Activated T-helper 2 cell treated with anti-CD3 and anti-CD28 coated beads, Interferon-gamma antibody, Interleukin-2, Interleukin-4, amounts not matched to agents 10 μg/mL and 5 μg/mL and 100 μg/mL, durations not matched to agents 14 hours and 24 hours and 36 hours (primary cell): ENCODE measurements at regions of chr11 and their contacts with region 1.

Region 1: GRCh38 chr11:114180301-114181055 is 115.7 kb upstream of the NNMT start:
- DNase-seq: no peak
- H3K4me3 Mint-ChIP-seq: no peak overlapping the region
- H3K27ac Mint-ChIP-seq: no peak overlapping the region
- H3K4me1 Mint-ChIP-seq: peaks cover 64% of the 10 kb centered on the region
- H3K27me3 Mint-ChIP-seq: no peaks in the 10 kb centered on the region

Region 2: GRCh38 chr11:114060392-114061350 is 119.8 kb before region 1 on chr11:
- intact Hi-C with region 1: loop called (anchors 5 kb)
- DNase-seq: no peak
- H3K4me3 Mint-ChIP-seq: peak overlapping the region; percentile 81
- H3K27ac Mint-ChIP-seq: no peak overlapping the region
- H3K4me1 Mint-ChIP-seq: peaks cover 11% of the 10 kb centered on the region
- H3K27me3 Mint-ChIP-seq: peaks cover 73% of the 10 kb centered on the region

Region 3: GRCh38 chr11:114085965-114086793 is 94.3 kb before region 1 on chr11:
- intact Hi-C with region 1: loop called (anchors 5 kb)
- DNase-seq: no peak
- H3K4me3 Mint-ChIP-seq: no peak overlapping the region
- H3K27ac Mint-ChIP-seq: no peak overlapping the region
- H3K4me1 Mint-ChIP-seq: peaks cover 35% of the 10 kb centered on the region
- H3K27me3 Mint-ChIP-seq: peaks cover 23% of the 10 kb centered on the region

Region 4: DNA sequence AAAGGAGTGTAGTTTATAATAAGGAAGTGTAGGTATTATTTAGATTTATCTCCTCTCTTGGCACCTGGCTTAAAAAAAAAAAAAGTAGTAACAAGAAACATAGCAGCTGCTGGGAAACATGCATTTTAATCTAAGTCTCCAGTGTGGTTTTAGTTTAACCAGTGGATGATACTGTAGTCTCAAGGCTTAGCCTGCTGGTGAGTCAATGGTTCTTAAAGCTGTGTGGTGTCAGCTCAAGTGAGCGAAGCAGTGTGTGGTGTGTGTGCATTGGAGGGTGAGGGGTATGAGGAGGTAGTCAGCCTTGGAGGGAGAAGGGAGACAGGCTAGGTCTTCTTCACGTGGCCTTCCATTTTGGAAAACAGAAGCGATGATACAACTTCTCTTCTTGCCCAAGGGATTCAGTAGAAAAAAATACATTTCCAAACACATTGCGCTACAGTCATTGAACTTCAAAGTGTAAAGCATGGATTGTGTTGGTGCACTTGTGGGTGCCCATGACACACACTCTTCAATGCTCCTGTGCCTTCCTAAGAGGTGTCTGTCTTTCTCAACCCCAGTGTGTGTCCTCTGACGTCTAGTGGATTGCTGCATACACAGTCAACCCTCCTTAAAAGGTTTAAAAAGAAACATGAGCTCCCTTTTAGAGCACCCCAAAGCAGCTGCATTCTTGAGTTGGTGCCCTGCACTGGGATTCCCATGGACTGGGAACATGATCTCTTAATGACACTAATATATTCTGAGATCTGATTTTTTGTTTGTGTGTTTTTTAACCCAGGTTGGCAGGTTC is 80.9 kb before region 1 on chr11:
- intact Hi-C with region 1: loop called (anchors 1 kb)
- DNase-seq: no peak
- H3K4me3 Mint-ChIP-seq: no peak overlapping the region
- H3K27ac Mint-ChIP-seq: no peak overlapping the region
- H3K4me1 Mint-ChIP-seq: peaks cover 52% of the 10 kb centered on the region
- H3K27me3 Mint-ChIP-seq: peaks cover 19% of the 10 kb centered on the region

Region 5: GRCh38 chr11:114166897-114167323 is 13.6 kb before region 1 on chr11:
- intact Hi-C with region 1: loop called (anchors 1 kb)
- DNase-seq: no peak
- H3K4me3 Mint-ChIP-seq: peak overlapping the region; percentile 11
- H3K27ac Mint-ChIP-seq: peak overlapping the region; percentile 48
- H3K4me1 Mint-ChIP-seq: peaks cover 64% of the 10 kb centered on the region
- H3K27me3 Mint-ChIP-seq: no peaks in the 10 kb centered on the region

Region 6: DNA sequence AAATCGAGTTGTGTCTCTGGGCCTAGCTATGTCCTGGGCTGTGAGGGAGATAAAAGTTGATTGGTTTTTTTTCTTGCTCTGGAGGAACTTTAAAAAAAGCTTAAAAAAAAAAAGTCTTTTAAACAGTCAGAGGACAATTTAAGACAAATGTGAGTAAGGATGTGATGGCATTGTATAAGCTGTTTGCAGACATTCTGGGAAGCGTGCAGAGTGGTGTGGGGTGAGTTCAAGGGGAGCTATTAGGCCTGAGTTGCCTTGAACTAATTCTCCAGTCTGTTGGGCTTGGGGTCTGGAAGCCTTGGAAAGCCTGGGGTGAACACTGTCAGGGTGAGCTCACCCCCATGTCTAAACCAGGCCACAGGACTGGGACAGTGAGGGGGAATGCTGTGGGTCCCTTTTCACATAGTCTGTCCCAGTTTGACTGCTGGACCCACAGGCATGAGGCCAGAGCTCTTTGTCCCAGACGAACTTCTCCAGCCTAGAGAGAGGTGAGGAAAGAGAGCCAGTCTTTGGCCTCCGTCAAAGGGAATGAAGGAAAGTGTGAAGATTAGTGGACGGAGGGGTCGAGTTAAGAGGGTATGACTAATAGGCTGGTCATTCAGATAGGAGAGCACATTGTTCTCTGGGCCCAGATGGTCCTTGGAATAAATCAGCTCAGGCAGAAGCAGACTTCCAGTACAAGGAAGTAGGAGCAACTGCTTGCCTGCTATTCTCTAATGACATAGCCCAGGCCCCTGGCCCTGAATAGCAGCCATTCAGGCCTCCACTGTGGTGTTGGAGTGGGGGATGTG is 39.3 kb after region 1 on chr11:
- intact Hi-C with region 1: loop called (anchors 5 kb)
- DNase-seq: no peak
- H3K4me3 Mint-ChIP-seq: no peak overlapping the region
- H3K27ac Mint-ChIP-seq: no peak overlapping the region
- H3K4me1 Mint-ChIP-seq: peaks cover 36% of the 10 kb centered on the region
- H3K27me3 Mint-ChIP-seq: peaks cover 18% of the 10 kb centered on the region

Region 7: GRCh38 chr11:114400217-114400914 is 219.9 kb after region 1 on chr11 and contains the starts of genes C11orf71 and RBM7:
- intact Hi-C with region 1: loop called (anchors 10 kb)
- DNase-seq: peak; percentile 97
- H3K4me3 Mint-ChIP-seq: peak within 1 kb of the TSS; percentile 92
- H3K27ac Mint-ChIP-seq: peak within 1 kb of the TSS; percentile 97
- H3K4me1 Mint-ChIP-seq: peaks cover 37% of the 10 kb centered on the region
- H3K27me3 Mint-ChIP-seq: no peaks in the 10 kb centered on the region
- total RNA-seq, gene C11orf71: 5.8 and 6.3 TPM in 2 replicates
- total RNA-seq, gene RBM7: 39.4 and 39.6 TPM in 2 replicates